Mammary epithelial cell (primary cell): ENCODE measurements at regions of chr5 and their contacts with region 1.

Region 1: GRCh38 chr5:41869739-41870626 is at the start of gene OXCT1:
- DNase-seq: peak; percentile 91
- H3K4me3 ChIP-seq: peak within 1 kb of the TSS; percentile 67 to 92 (median 83)
- H3K27ac ChIP-seq: peak within 1 kb of the TSS; percentile 70
- H3K4me1 ChIP-seq: peaks cover 21% of the 10 kb centered on the region
- H3K27me3 ChIP-seq: no peaks in the 10 kb centered on the region
- CTCF ChIP-seq: no peak
- total RNA-seq, gene OXCT1: 18.2 to 36.4 TPM

Region 2: DNA sequence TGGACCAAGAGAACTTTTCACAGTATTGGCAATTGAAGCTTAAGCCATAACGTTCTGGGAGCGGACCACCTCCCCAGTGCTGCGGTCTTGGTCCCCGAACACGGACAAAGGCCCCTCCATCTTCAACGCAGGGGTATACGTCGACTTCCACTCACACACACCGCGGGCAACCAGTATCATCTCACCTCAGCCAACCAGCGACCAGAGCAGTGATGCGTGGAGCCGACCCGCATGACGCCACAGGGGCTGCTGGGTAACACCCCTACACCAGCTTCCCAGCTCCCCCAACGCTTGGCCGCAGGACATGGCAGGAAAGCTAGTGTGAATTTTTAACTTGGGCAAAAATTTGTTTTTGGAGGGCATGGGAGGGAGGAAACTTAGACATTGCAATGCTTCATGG is 282.3 kb before region 1 on chr5:
- CTCF ChIA-PET with region 1: no interaction called
- dilution Hi-C with region 1: no loop called
- in situ Hi-C with region 1: no loop called
- intact Hi-C with region 1: no loop called
- DNase-seq: no peak
- H3K4me3 ChIP-seq: no peak overlapping the region
- H3K27ac ChIP-seq: no peak overlapping the region
- H3K4me1 ChIP-seq: no peaks in the 10 kb centered on the region
- H3K27me3 ChIP-seq: no peaks in the 10 kb centered on the region
- CTCF ChIP-seq: no peak

Region 3: DNA sequence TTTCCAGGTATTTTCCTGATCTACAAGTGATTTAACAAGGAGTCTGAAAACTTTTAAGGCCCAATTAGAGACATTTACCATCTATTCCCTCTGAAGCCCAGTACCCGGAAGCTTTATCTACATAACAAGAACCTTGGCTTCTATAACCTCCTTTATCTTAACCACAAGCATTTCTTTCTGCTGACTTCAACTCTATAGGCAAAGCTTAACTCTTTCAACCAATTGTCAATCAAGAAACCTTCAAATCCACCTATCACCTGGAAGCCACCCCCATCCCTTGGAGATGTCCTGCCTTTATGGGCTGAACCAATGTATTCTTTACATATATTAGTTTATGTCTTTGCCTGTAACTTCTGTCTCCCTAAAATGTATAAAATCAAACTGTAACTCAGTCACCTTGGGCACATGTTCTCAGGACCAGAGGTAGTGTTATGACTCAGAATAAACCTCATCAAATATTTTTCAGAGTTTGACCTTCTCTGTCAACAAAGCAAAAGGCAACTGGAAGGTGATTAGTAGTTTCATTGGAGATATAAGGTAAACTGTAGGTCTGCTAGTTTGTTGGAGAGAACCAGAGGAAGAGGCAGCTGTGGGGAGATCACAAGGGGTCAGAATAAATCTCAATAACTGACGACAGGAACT is 21.2 kb after region 1 on chr5:
- CTCF ChIA-PET with region 1: no interaction called
- dilution Hi-C with region 1: no loop called
- in situ Hi-C with region 1: no loop called
- intact Hi-C with region 1: loop called (anchors 1 kb)
- DNase-seq: no peak
- H3K4me3 ChIP-seq: no peak overlapping the region
- H3K27ac ChIP-seq: no peak overlapping the region
- H3K4me1 ChIP-seq: no peaks in the 10 kb centered on the region
- H3K27me3 ChIP-seq: no peaks in the 10 kb centered on the region
- CTCF ChIP-seq: no peak

Region 4: DNA sequence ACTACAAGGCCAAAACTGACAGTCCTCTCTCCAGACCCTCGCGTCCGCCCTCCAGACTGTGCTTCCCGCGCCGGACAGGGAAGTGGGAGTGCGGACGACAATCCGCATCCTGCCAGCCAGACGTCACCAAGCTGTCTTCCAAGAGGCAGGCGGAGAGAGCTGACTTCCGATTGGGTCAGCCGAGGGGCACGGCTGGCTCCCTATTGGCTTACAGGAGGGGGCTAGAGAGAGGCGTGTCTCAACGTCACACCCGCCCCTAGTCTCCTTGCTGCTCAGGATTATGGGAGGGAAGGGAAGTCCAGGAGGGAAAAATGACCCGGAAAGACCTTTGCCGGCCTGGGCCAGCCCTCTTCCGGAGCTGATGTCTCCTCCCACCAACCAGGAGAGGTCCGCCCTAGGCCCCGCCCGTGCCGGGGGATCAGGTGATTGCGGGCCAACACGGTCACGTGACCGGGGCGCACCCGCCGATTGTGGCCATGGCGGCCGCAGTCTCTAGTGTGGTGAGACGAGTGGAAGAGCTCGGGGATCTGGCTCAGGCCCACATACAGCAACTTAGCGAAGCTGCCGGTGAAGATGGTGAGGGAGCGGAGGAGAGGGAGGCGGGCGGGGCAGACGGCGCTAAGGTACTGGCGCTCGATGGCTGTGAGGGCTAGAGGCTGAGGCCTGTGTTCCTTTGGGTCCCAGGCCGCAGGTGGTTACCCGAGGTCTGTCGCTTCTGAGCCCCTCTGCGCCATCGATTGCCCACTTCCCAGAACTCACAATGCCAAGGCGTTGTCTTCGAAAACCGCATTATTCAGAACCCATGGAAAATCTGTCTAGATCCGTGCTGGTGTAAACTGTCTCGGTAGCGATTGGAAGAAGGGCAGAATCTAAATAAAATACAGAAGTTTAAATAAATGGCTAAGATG is 34.2 kb after region 1 on chr5 and contains the start of gene RIMOC1:
- CTCF ChIA-PET with region 1: no interaction called
- dilution Hi-C with region 1: no loop called
- in situ Hi-C with region 1: no loop called
- intact Hi-C with region 1: loop called (anchors 1 kb)
- DNase-seq: peak; percentile 99
- H3K4me3 ChIP-seq: peak within 1 kb of the TSS; percentile 82 to 97 (median 84)
- H3K27ac ChIP-seq: peak within 1 kb of the TSS; percentile 87
- H3K4me1 ChIP-seq: peaks cover 17% of the 10 kb centered on the region
- H3K27me3 ChIP-seq: no peaks in the 10 kb centered on the region
- CTCF ChIP-seq: no peak
- total RNA-seq, gene RIMOC1: 16.7 to 31.5 TPM

Region 5: GRCh38 chr5:41924872-41925554 is 55.0 kb after region 1 on chr5 and contains the start of gene FBXO4:
- CTCF ChIA-PET with region 1: no interaction called
- dilution Hi-C with region 1: no loop called
- in situ Hi-C with region 1: no loop called
- intact Hi-C with region 1: loop called (anchors 2 kb)
- DNase-seq: peak; percentile 68
- H3K4me3 ChIP-seq: peak within 1 kb of the TSS; percentile 60 to 72 (median 68)
- H3K27ac ChIP-seq: peak within 1 kb of the TSS; percentile 92
- H3K4me1 ChIP-seq: peaks cover 21% of the 10 kb centered on the region
- H3K27me3 ChIP-seq: no peaks in the 10 kb centered on the region
- CTCF ChIP-seq: peak in 1 of 2 donors; percentile 54
- total RNA-seq, gene FBXO4: 8.0 to 8.8 TPM

Region 6: DNA sequence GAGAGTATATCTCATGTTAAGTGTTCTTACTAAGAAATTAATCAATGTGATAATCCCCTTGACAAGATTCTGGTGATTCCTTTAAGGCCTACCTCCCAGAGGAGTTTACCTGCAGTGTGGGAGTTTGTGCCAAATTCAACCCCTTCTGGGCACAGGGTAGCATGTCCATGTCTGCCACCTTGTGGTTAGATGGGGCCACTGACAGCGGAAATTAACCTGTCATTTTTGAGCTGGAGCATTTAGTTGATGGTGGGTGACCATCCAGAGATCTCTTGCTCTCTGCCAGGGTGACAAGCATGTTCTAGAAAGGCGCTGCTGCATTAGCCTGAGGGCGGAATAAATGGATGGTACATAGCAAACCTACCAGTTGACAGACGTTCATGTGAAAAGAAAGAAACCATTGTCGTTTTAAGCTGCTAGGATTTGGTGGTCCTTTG is 187.3 kb after region 1 on chr5:
- CTCF ChIA-PET with region 1: interaction called, 7 read pairs
- dilution Hi-C with region 1: no loop called
- in situ Hi-C with region 1: loop called in 1 of 2 experiments (anchors 25 kb)
- intact Hi-C with region 1: loop called (anchors 5 kb)
- DNase-seq: peak; percentile 38
- H3K4me3 ChIP-seq: no peak overlapping the region
- H3K27ac ChIP-seq: no peak overlapping the region
- H3K4me1 ChIP-seq: peaks cover 16% of the 10 kb centered on the region
- H3K27me3 ChIP-seq: no peaks in the 10 kb centered on the region
- CTCF ChIP-seq: peak; percentile 84